Body of pancreas (tissue), 4 donors: ENCODE measurements at regions of chr4 and their contacts with region 1.

Region 1: DNA sequence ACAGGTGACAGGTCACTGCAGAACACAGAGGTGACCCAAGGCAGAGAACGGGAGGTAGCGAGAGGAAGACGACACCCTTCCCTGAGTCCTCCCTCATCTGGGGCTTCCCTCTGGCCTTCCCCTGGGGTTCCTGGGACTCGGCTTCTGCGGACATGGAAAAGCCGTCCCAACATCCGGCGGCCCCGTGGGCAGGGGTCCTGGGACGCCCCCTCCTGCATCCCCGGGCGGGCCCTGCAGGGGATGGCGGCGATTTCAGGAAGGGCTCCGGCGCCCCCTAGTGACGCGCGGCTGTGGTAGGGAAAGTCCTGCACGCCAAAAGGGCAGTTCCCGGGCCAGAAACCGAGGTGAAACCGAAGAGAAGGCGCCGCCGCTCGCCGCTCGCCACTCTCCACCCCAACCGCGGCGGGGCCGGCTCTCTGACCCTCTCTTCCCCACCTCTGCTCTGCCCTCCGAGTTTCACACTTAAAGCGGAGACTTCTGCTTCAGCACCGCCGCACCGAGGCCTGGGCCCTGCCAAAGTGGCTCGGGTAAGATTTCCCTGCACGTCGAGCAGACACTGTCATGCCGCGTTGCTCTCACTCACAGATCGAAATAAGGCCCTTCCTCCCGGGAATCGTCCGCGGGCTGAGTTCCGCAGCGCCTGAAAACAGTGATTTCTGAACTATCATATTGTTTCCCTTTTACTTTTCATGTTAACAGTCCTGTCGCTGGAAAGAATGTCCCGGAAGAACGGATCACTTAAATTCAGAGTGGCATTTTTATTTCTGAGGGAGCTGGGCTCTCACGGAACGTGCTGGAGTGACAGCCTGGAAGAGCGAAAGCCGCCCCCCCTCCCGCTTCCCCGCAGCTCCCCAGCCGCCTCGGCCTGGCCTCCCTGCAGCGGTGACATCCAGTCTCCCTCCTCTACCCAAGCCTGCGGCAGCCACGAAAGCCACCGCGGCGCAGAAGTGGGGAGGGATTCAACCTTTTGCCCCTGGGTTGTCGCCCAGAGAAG is 110.6 kb downstream of the DCTD start:
- DNase-seq: peak; percentile 69 to 83 (median 78)
- ATAC-seq: peak; percentile 84
- H3K4me3 ChIP-seq: no peak overlapping the region
- H3K27ac ChIP-seq: no peak overlapping the region
- H3K4me1 ChIP-seq: no peaks in the 10 kb centered on the region
- H3K27me3 ChIP-seq: no peaks in the 10 kb centered on the region
- CTCF ChIP-seq: peak; percentile 72 to 94 (median 85)
- POLR2A ChIP-seq: no peak

Region 2: GRCh38 chr4:182486881-182487280 is 319.7 kb before region 1 on chr4:
- intact Hi-C with region 1: loop called (anchors 10 kb)
- DNase-seq: no peak
- ATAC-seq: no peak
- H3K4me3 ChIP-seq: no peak overlapping the region
- H3K27ac ChIP-seq: no peak overlapping the region
- H3K4me1 ChIP-seq: no peaks in the 10 kb centered on the region
- H3K27me3 ChIP-seq: no peaks in the 10 kb centered on the region
- CTCF ChIP-seq: no peak
- POLR2A ChIP-seq: no peak